ENCODE measurements at regions of chr5 and their contacts with region 1.

Region 1: DNA sequence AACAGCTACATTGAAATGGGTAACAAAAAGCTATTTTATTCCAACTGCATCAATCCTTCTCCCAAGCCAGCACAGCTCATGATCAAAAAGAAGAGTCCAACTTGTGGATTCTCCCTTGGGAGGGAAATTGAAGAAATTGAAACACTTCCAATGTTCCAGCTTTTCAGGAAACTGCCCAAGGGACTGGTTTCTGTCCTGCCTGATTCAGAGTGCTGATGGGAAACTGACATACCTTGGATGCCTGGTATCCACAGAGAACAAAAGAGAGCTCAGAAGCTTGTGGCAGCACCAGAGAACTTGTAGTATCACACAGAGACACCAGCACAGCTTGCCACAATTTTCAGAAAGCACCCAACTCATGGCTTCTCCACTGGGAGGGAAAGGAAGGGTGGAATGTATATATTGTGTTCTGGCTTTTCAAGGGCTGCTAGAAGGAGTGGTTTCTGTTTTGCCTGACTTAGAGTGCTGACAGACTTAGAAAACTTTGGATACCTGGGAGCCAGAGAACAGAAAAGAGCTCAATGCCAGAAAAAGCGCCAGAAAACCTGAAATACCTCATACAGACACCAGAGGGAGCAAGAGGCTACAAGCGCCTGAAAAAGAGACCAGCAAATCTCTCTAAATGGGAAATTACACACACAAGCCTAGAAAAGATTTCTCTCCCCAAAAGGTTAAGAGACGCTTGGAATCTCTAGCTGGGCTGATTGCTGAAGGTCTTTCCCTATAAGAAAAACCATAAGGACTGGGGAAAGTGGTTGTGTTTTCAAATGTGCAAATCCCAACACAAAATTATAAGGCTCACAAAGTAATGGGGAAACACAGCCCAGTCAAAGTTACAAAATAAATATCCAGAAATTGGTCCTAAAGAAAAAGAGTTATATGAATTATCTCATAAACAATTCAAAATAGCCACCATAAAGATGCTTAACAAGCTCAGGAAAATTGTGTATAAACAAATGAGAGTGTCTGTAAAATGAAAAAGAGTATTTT is 178.8 kb downstream of the SPOCK1 start:
- DNase-seq: peak; percentile 79
- H3K27ac ChIP-seq: no peak overlapping the region
- CTCF ChIP-seq: peak; percentile 90

Region 2: GRCh38 chr5:136924490-136924889 is 395.9 kb before region 1 on chr5:
- CTCF ChIA-PET with region 1: no interaction called
- POLR2A ChIA-PET with region 1: no interaction called
- DNase-seq: no peak
- H3K27ac ChIP-seq: no peak overlapping the region
- CTCF ChIP-seq: no peak

Region 3: GRCh38 chr5:137344723-137345322 is 24.5 kb after region 1 on chr5:
- CTCF ChIA-PET with region 1: interaction called, 10 read pairs
- POLR2A ChIA-PET with region 1: no interaction called
- DNase-seq: peak; percentile 29
- H3K27ac ChIP-seq: no peak overlapping the region
- CTCF ChIP-seq: peak; percentile 67

Region 4: DNA sequence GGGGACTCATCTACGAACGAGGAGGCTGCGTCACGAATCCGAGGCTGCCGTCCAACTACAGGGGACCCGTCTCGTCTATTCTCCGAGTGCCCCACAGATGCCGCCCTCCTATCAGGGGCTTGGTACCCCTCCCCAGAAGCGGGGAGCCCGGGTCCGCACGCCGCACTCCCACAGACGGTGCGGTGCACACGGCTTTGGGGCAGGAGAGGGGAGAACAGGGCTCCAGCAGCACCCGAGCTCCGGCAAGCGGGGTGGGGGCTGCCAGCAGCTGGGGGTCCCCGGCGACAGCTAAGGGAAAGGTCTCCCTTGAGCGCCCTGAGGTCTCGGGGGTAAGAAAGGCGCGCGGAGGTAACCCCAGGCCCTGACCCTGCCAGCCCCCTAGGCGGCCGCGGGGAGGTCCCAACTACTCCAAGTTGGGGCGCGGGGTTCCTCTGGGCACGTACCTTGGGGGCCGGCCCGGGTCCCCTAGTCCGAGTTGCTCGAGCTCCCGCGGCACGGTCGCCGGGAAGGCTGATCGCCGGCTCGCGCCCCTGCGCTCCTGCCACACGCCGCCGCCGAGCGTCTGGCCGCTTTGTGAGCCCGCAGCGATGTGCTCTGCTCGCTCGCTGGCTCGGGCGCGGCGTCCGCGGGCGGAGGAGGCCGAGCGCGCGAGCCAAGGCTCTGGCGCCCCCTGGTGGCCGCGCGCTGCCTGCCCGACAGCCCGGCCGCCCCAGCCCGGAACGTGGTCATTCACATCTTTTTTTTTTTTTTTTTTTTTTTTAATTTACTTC is 178.6 kb after region 1 on chr5 and contains the start of gene SPOCK1:
- CTCF ChIA-PET with region 1: interaction called, 22 read pairs
- POLR2A ChIA-PET with region 1: no interaction called
- DNase-seq: peak; percentile 89
- H3K27ac ChIP-seq: no peak within 1 kb of the TSS
- CTCF ChIP-seq: peak; percentile 97

Measured in RWPE1 (cell line).